Activated naive CD4-positive, alpha-beta T cell treated with anti-CD3 and anti-CD28 coated beads for 36 hours (primary cell): ENCODE measurements at regions of chr2 and their contacts with region 1.

Region 1: GRCh38 chr2:134118279-134119116 is 135.4 kb upstream of the MGAT5 start:
- DNase-seq: peak; percentile 96
- H3K4me3 Mint-ChIP-seq: no peak overlapping the region
- H3K27ac Mint-ChIP-seq: no peak overlapping the region
- H3K4me1 Mint-ChIP-seq: peaks cover 32% of the 10 kb centered on the region
- H3K27me3 Mint-ChIP-seq: peaks cover 3% of the 10 kb centered on the region

Region 2: DNA sequence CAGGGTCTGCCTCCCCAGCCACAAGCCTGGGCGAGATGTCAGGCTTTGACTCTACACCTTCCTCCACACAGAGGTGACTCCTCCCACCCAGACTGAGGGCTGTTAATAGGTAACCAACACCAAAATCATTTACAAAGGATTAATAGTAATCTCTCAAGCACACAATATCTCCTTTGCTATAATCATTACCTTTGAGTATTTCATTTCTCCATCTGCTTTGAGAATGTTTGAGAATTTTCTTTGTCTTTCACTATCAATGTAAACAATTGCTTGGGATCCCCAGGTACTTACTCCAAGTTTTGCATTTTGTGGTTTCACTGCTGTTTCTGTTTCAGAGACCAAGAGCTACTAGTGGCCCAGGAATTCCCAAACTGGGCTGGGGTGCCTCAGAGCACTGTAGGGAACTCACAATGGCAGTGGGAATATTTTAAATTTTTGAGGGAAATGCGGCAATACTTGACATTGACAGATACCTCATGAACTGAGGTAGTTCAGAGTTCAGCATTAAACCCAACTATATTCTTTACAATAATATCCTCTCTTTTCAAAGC is 31.1 kb before region 1 on chr2:
- CTCF ChIA-PET with region 1: no interaction called
- intact Hi-C with region 1: no loop called
- DNase-seq: no peak
- H3K4me3 Mint-ChIP-seq: no peak overlapping the region
- H3K27ac Mint-ChIP-seq: no peak overlapping the region
- H3K4me1 Mint-ChIP-seq: no peaks in the 10 kb centered on the region
- H3K27me3 Mint-ChIP-seq: peaks cover 3% of the 10 kb centered on the region

Region 3: DNA sequence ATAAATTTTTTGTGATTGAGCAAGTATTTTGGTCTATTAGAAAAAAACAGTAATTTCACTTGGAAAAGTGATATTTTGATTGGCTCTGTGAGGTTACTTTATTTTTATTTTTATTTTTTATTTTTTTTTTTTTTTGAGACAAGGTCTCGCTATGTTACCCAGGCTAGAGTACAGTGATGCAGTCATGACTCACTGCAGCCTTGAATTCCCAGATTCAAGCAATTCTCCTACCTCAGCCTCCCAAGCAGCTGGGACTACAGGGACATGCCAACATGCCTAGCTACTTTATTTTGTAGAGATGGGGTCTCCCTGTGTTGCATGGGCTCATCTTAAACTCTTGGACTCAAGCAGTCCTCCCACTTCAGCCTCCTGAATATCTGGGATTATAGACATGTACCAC is 74.5 kb after region 1 on chr2:
- CTCF ChIA-PET with region 1: interaction called, 25 read pairs
- intact Hi-C with region 1: loop called (anchors 1 kb)
- DNase-seq: no peak
- H3K4me3 Mint-ChIP-seq: no peak overlapping the region
- H3K27ac Mint-ChIP-seq: no peak overlapping the region
- H3K4me1 Mint-ChIP-seq: peaks cover 56% of the 10 kb centered on the region
- H3K27me3 Mint-ChIP-seq: no peaks in the 10 kb centered on the region

Region 4: DNA sequence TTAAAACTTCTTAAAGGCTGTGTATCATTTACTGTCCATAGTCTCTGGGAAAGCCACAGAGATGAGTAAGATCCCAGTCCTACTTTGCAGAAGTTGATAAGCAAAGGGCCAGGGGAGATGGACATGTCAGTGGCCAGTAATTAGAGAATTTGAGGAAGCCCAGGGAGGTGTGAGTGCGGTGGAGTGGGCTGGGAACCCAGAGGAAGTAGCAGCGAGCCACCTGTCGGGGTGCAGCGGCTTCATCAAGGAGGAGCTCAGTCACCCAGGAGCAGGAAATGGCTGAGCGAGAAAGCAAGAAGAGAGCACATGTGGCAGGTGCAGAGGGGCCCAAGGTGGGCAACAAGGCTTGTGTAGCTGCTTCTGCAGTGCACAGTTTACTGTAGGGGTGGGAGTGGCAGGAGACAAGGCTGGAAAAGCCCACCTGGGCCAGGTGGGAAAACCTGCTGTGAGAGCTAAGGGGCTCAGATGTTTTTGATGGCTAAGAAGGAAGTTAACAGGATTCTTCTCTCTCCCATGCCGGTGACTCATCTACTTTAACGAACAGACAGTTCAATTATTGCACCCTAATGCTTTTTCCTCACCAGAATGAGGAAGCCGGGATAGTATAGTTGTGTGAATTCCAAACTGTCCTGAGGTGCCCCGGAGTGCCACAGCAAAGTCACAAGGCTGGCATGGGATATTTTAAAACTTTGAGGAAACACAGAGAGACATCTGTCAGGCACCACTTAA is 100.6 kb after region 1 on chr2:
- CTCF ChIA-PET with region 1: interaction called, 16 read pairs
- intact Hi-C with region 1: loop called (anchors 1 kb)
- DNase-seq: peak; percentile 66
- H3K4me3 Mint-ChIP-seq: peak overlapping the region; percentile 33
- H3K27ac Mint-ChIP-seq: peak overlapping the region; percentile 91
- H3K4me1 Mint-ChIP-seq: peaks cover 60% of the 10 kb centered on the region
- H3K27me3 Mint-ChIP-seq: no peaks in the 10 kb centered on the region

Region 5: GRCh38 chr2:134253804-134254203 is 135.3 kb after region 1 on chr2 and contains the start of gene MGAT5:
- CTCF ChIA-PET with region 1: interaction called, 17 read pairs
- intact Hi-C with region 1: no loop called
- DNase-seq: no peak
- H3K4me3 Mint-ChIP-seq: no peak within 1 kb of the TSS
- H3K27ac Mint-ChIP-seq: no peak within 1 kb of the TSS
- H3K4me1 Mint-ChIP-seq: peaks cover 82% of the 10 kb centered on the region
- H3K27me3 Mint-ChIP-seq: peaks cover 2% of the 10 kb centered on the region
- total RNA-seq, gene MGAT5: 11.6 to 13.0 TPM

Region 6: GRCh38 chr2:134411828-134412638 is 293.5 kb after region 1 on chr2:
- CTCF ChIA-PET with region 1: interaction called, 61 read pairs
- intact Hi-C with region 1: loop called (anchors 1 kb)
- DNase-seq: peak; percentile 83
- H3K4me3 Mint-ChIP-seq: no peak overlapping the region
- H3K27ac Mint-ChIP-seq: no peak overlapping the region
- H3K4me1 Mint-ChIP-seq: peaks cover 18% of the 10 kb centered on the region
- H3K27me3 Mint-ChIP-seq: no peaks in the 10 kb centered on the region

Region 7: GRCh38 chr2:134866549-134866981 is 748.1 kb after region 1 on chr2:
- CTCF ChIA-PET with region 1: no interaction called
- intact Hi-C with region 1: no loop called
- DNase-seq: no peak
- H3K4me3 Mint-ChIP-seq: no peak overlapping the region
- H3K27ac Mint-ChIP-seq: no peak overlapping the region
- H3K4me1 Mint-ChIP-seq: no peaks in the 10 kb centered on the region
- H3K27me3 Mint-ChIP-seq: no peaks in the 10 kb centered on the region

Region 8: DNA sequence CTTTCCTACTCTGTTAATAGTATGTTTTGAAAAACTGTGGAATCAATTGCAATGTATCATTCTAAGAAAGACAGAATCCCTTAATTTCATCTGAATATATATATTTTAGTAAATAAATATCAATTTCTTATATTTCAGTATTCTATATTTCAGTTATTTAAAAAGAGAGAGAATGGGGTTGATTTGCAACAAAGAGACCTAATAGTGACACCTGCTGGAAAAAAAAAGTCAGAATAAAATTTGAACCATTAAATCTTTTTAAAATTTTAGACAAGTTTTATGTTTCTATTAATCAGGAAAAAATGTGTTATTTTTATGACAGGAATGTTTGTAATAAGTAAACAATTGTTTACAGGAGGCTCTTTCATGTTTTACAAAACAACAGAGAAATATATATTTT is 779.4 kb after region 1 on chr2:
- CTCF ChIA-PET with region 1: no interaction called
- intact Hi-C with region 1: loop called (anchors 1 kb)
- DNase-seq: no peak
- H3K4me3 Mint-ChIP-seq: no peak overlapping the region
- H3K27ac Mint-ChIP-seq: no peak overlapping the region
- H3K4me1 Mint-ChIP-seq: no peaks in the 10 kb centered on the region
- H3K27me3 Mint-ChIP-seq: no peaks in the 10 kb centered on the region